Dorsolateral prefrontal cortex (tissue), 120 donors: ENCODE measurements at regions of chr2 and their contacts with region 1.

Region 1: GRCh38 chr2:96951093-96951654 is 35.2 kb downstream of the FAM178B start:
- DNase-seq: peak; percentile 78 to 91 (median 86)
- H3K4me3 ChIP-seq: peak overlapping the region in 23 of 59 donors; percentile 3 to 42 (median 21)
- H3K27ac ChIP-seq: peak overlapping the region; percentile 76 to 100 (median 97)
- H3K27me3 ChIP-seq: no peaks in the 10 kb centered on the region
- CTCF ChIP-seq: peak; percentile 58 to 99 (median 96)

Region 2: DNA sequence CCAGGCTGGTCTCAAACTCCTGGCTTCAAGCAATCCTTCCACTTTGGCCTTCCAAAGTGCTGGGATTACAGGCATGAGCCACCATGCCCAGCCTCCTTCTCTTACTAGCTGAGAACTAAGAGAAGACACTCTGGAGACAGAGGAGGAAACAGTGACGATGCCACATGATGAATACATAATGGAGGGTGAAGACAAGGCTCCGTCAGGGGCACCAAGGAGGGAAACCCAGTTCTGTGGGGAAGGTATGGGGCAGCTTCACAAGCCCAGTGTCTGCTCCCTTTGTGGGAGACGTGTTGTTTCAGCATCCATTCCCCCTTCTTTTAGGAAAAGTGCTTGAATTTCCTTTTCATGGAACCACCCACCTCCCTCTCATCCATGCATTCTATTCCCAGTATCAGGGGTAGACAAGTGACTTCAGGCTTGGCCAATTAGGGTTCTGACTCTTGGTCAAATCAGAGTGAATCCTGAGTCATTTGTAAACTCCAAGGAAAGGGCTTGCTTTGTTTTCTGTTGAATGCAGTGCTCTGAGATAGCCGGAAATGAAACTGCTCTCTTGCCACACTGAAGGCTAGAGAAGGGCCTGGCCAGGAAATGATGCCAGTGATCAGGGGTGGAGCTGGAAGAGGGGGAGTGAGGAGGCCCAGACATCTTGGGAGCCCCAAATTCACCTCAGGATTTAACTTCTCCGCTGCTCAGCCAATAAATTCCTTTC is 709.1 kb before region 1 on chr2:
- intact Hi-C with region 1: no loop called
- DNase-seq: peak in 3 of 10 donors; percentile 28 to 52 (median 48)
- H3K4me3 ChIP-seq: peak overlapping the region in 5 of 59 donors; percentile 4 to 20 (median 11)
- H3K27ac ChIP-seq: peak overlapping the region in 58 of 59 donors; percentile 5 to 89 (median 78)
- H3K27me3 ChIP-seq: no peaks in the 10 kb centered on the region
- CTCF ChIP-seq: no peak

Region 3: GRCh38 chr2:96638144-96639121 is 312.7 kb before region 1 on chr2 and contains the start of gene KANSL3:
- intact Hi-C with region 1: loop called in 1 of 2 experiments (anchors 5 kb)
- DNase-seq: peak; percentile 73 to 92 (median 82)
- H3K4me3 ChIP-seq: peak within 1 kb of the TSS; percentile 57 to 95 (median 83)
- H3K27ac ChIP-seq: peak within 1 kb of the TSS in 56 of 59 donors; percentile 18 to 95 (median 84)
- H3K27me3 ChIP-seq: no peaks in the 10 kb centered on the region
- CTCF ChIP-seq: peak in 31 of 56 donors; percentile 6 to 58 (median 26)
- total RNA-seq, gene KANSL3: 39.7 to 81.1 (median 55.0) TPM

Region 4: DNA sequence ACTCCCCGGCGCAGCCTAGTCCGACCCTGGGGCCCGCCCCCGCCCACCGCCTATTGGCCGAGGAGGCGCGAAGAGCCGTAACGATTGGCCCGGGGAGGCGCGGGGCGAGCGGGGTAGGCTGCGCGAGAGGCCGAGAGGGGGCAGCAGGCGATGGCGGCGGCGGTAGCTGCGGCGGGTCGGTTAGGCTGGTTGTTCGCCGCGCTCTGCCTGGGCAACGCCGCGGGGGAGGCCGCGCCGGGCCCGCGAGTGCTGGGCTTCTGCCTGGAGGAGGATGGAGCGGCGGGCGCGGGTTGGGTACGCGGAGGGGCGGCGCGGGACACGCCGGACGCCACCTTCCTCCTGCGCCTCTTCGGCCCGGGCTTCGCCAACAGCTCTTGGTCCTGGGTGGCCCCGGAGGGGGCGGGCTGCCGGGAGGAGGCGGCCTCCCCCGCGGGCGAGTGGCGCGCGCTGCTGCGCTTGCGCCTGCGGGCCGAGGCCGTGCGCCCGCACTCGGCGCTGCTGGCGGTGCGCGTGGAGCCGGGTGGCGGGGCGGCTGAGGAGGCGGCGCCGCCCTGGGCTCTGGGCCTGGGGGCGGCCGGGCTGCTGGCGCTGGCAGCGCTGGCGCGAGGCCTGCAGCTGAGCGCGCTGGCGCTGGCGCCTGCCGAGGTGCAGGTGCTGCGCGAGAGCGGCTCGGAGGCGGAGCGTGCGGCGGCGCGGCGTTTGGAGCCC is 134.9 kb before region 1 on chr2 and contains the start of gene CNNM3:
- intact Hi-C with region 1: loop called (anchors 5 kb)
- DNase-seq: peak; percentile 89 to 98 (median 96)
- H3K4me3 ChIP-seq: peak within 1 kb of the TSS; percentile 62 to 94 (median 82)
- H3K27ac ChIP-seq: peak within 1 kb of the TSS; percentile 92 to 99 (median 98)
- H3K27me3 ChIP-seq: no peaks in the 10 kb centered on the region
- CTCF ChIP-seq: peak in 55 of 56 donors; percentile 23 to 80 (median 60)
- total RNA-seq, gene CNNM3: 15.1 to 52.1 (median 34.2) TPM

Region 5: GRCh38 chr2:96856776-96857673 is 94.1 kb before region 1 on chr2:
- intact Hi-C with region 1: loop called (anchors 1 to 2 kb)
- DNase-seq: peak in 3 of 10 donors; percentile 29 to 61 (median 45)
- H3K4me3 ChIP-seq: peak overlapping the region; percentile 55 to 100 (median 87)
- H3K27ac ChIP-seq: peak overlapping the region; percentile 36 to 95 (median 90)
- H3K27me3 ChIP-seq: no peaks in the 10 kb centered on the region
- CTCF ChIP-seq: peak in 1 of 56 donors; percentile 9

Region 6: GRCh38 chr2:96868555-96869280 is 82.5 kb before region 1 on chr2:
- intact Hi-C with region 1: loop called in 1 of 2 experiments (anchors 2 kb)
- DNase-seq: peak in 9 of 10 donors; percentile 57 to 83 (median 67)
- H3K4me3 ChIP-seq: peak overlapping the region; percentile 70 to 99 (median 91)
- H3K27ac ChIP-seq: peak overlapping the region; percentile 67 to 100 (median 99)
- H3K27me3 ChIP-seq: no peaks in the 10 kb centered on the region
- CTCF ChIP-seq: peak; percentile 29 to 88 (median 66)

Region 7: DNA sequence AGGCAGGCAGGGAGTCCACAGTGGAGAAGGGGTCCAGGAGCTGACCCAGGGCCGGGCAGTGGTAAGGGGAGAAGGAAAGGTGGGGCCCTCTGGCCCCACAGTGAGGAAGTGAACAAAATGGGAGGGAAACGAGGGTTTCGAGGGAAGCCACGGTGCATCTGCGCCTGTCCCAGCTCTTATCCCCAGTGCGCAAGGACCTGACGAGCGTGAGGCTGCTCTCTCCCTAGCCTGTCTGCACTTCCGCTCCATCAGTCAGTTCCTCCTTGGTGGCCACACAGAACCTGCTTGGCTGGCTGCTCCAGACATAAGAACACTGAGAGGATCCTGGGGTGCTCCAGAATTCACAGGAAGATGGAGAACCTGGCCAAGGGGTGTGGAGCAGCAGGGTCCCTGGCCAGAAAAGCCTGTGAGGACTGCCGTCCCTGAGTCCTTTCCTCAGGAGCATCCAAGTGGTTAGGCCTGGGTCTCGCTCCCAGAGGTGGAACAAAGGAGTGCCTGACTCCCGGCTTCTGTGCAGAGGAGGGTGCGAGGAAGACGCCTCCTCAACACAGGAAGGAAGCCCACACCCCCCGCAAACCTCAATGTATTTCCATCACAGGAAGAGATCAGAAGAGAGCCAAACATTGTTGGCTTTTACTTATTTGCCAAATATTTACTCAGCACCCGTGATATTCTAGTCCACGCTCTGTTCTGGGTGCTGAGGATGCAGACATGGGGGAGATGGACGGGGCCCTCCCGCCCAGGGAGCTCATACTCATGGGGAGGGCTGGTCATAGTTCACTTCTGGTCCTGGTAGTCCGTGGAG is 37.6 kb before region 1 on chr2:
- intact Hi-C with region 1: loop called (anchors 5 kb)
- DNase-seq: peak in 5 of 10 donors; percentile 40 to 69 (median 61)
- H3K4me3 ChIP-seq: peak overlapping the region in 47 of 59 donors; percentile 8 to 57 (median 39)
- H3K27ac ChIP-seq: peak overlapping the region in 56 of 59 donors; percentile 27 to 90 (median 82)
- H3K27me3 ChIP-seq: no peaks in the 10 kb centered on the region
- CTCF ChIP-seq: no peak

Region 8: GRCh38 chr2:96927405-96928243 is 23.6 kb before region 1 on chr2:
- intact Hi-C with region 1: loop called in 1 of 2 experiments (anchors 1 kb)
- DNase-seq: peak; percentile 50 to 90 (median 82)
- H3K4me3 ChIP-seq: peak overlapping the region in 48 of 59 donors; percentile 1 to 49 (median 25)
- H3K27ac ChIP-seq: peak overlapping the region; percentile 71 to 100 (median 97)
- H3K27me3 ChIP-seq: no peaks in the 10 kb centered on the region
- CTCF ChIP-seq: peak in 8 of 56 donors; percentile 6 to 26 (median 17)